Heart left ventricle (tissue), 16 donors: ENCODE measurements at regions of chr2 and their contacts with region 1.

Region 1: DNA sequence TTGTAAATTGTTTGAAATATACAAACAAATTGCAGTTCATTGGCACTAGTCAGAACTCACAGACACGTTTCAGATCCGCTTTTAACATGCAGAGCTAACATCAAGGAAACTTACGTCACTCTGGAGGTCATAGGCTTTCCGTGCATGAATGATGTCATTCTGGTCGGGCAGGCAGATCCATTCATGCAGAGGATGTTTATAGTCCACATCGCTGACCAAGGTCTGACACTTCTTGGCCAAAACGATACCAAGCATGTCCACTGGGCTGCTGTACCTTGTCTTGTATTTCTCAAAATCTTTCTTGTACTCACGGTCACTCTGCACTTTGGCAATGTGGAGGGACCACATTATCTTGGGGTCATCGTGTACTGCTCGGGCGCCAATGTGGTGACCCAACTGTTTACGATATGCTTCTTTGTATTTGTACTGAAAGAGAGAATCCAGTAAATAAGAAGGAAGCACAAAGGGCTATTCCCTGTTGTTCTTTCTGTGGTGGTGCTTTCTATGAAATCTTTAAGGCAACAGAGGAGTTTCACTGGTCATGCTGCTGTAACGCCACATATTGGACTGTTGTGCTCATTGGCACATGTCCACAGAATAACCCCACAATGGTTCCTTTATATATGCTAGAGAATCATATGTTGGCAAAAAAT is 114.8 kb downstream of the NEB start:
- DNase-seq: no peak
- ATAC-seq: peak in 1 of 4 donors; percentile 74
- H3K4me3 ChIP-seq: no peak overlapping the region
- H3K27ac ChIP-seq: no peak overlapping the region
- H3K4me1 ChIP-seq: no peaks in the 10 kb centered on the region
- H3K27me3 ChIP-seq: no peaks in the 10 kb centered on the region
- CTCF ChIP-seq: no peak
- POLR2A ChIP-seq: no peak

Region 2: DNA sequence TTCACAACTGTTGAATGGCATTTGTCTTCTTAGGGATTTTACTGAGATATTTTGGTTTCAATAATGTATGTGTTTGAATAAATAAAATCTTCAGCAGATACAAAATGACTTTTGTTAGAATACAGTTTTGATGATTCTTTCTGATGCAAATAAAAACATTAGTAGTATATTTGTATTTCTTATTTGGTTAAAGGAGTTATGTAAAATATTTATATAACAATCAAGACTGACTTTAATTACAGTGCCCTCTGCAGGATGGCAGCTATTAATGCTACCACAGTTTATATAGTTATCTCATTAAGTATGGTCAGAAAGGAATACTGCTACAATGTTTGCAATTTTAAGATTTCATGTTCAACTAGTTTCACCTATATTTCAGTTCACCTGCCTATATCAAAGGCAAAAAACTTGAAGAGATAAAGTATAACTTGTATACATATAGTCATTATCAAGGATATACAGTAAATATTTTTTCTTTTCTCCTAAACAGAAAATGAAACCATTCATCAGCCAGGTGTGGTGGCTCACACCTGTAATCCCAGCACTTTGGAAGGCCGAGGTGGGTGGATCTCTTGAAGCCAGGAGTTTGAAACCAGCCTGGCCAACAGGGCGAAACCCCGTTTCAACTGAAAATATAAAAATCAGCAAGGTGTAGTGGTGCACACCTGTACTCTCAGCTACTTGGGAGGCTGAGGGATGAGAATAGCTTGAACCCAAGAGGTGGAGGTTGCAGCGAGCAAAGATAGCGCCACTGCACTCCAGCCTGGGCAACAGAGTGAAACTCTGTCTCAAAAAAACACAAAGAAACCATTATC is 189.0 kb after region 1 on chr2:
- intact Hi-C with region 1: loop called in 2 of 10 experiments (anchors 10 kb)
- DNase-seq: no peak
- ATAC-seq: no peak
- H3K4me3 ChIP-seq: no peak overlapping the region
- H3K27ac ChIP-seq: no peak overlapping the region
- H3K4me1 ChIP-seq: peaks cover 0 to 13% (median 6%) of the 10 kb centered on the region in 12 donors
- H3K27me3 ChIP-seq: no peaks in the 10 kb centered on the region
- CTCF ChIP-seq: peak; percentile 36 to 70 (median 58)
- POLR2A ChIP-seq: no peak

Region 3: DNA sequence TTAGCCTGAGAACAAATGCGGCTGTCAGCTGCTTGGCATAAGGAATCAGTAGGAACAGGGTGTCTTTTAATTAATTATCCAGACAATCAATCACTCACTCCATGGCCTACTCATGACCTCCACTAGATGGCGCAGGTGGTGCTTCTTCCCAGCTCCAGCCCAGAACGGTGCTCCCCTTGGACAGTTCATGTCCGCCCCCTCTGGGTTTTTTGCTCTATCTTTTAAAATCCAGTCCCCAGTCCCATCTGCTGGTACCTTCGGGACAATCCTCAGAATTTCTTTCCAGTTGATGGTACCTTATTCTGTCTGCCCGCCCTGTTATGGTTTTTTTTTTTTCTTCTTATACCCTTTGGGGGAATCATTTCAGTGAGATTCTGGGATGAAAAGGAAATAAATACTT is 379.6 kb after region 1 on chr2:
- intact Hi-C with region 1: loop called in 6 of 10 experiments (anchors 5 to 10 kb)
- DNase-seq: peak in 4 of 5 donors; percentile 29 to 56 (median 42)
- ATAC-seq: peak in 3 of 4 donors; percentile 59 to 73 (median 70)
- H3K4me3 ChIP-seq: no peak overlapping the region
- H3K27ac ChIP-seq: no peak overlapping the region
- H3K4me1 ChIP-seq: no peaks in the 10 kb centered on the region
- H3K27me3 ChIP-seq: no peaks in the 10 kb centered on the region
- CTCF ChIP-seq: peak; percentile 60 to 79 (median 72)
- POLR2A ChIP-seq: no peak

Region 4: DNA sequence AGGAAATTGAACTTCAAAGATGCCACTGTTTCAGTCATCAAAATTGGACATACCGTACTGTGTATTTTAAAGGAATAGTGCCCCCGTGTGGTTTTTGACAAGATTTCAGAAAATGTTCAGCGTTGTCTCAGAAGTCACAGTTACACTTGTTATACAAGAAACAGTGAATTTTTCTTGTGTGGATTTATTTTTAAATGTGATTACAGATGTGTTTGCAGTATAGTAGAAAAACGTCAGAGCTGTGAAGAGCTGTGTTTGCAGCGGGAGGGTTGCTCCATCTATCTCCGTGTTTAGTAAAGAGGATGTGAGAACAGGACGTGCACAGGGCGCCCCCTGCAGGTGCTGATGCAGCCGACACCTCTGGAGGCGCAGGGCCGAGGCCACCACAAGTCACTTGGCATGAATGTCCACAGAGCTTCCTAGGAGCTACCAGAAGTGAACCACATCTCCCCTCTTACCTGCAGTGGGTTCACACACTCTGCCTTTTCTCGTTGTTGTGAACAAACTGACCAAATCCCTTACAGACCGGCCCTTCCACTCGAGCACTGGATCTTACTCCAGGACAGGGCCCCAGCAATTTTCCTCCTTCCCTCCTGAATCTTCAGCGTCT is 406.3 kb after region 1 on chr2:
- intact Hi-C with region 1: loop called in 1 of 10 experiments (anchors 10 kb)
- DNase-seq: peak; percentile 77 to 91 (median 81)
- ATAC-seq: peak; percentile 87 to 98 (median 96)
- H3K4me3 ChIP-seq: peak overlapping the region in 11 of 12 donors; percentile 9 to 57 (median 40)
- H3K27ac ChIP-seq: no peak overlapping the region
- H3K4me1 ChIP-seq: peaks cover 0 to 4% (median 0%) of the 10 kb centered on the region in 12 donors
- H3K27me3 ChIP-seq: no peaks in the 10 kb centered on the region
- CTCF ChIP-seq: peak; percentile 88 to 99 (median 95)
- POLR2A ChIP-seq: no peak